Adrenal gland (tissue), 19 donors: ENCODE measurements at regions of chr4 and their contacts with region 1.

Region 1: DNA sequence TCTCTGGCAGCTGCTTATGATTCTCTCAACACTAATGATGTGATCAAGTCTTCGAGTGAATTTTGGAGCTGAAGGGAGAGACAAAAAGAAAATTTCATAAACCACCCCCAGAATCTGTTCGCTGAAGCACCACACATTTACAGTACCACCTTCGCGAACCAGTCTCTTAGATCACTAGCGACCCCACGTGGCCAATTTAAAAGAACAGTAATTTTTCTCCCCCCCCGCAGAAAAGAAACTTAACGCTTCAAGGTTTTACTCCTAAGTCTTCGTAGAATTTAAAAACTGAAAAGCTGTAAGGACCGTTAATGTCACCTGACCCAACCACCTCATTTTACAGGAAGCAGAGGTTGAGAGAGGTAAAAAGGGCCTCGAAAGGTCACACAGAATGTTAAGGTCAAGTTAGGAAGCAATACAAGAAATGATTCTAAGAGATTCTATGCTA is 187.5 kb downstream of the QDPR start:
- DNase-seq: peak; percentile 23 to 64 (median 45)
- H3K4me3 ChIP-seq: no peak overlapping the region
- H3K27ac ChIP-seq: no peak overlapping the region
- H3K4me1 ChIP-seq: peaks cover 6 to 8% of the 10 kb centered on the region in 2 donors
- H3K27me3 ChIP-seq: no peaks in the 10 kb centered on the region
- CTCF ChIP-seq: peak; percentile 53 to 75 (median 62)
- POLR2A ChIP-seq: no peak

Region 2: GRCh38 chr4:16794816-16795445 is 529.5 kb before region 1 on chr4:
- intact Hi-C with region 1: loop called in 1 of 2 experiments (anchors 10 kb)
- DNase-seq: peak; percentile 58 to 83 (median 60)
- H3K4me3 ChIP-seq: no peak overlapping the region
- H3K27ac ChIP-seq: no peak overlapping the region
- H3K4me1 ChIP-seq: no peaks in the 10 kb centered on the region
- H3K27me3 ChIP-seq: no peaks in the 10 kb centered on the region
- CTCF ChIP-seq: peak; percentile 55 to 77 (median 66)
- POLR2A ChIP-seq: no peak

Region 3: DNA sequence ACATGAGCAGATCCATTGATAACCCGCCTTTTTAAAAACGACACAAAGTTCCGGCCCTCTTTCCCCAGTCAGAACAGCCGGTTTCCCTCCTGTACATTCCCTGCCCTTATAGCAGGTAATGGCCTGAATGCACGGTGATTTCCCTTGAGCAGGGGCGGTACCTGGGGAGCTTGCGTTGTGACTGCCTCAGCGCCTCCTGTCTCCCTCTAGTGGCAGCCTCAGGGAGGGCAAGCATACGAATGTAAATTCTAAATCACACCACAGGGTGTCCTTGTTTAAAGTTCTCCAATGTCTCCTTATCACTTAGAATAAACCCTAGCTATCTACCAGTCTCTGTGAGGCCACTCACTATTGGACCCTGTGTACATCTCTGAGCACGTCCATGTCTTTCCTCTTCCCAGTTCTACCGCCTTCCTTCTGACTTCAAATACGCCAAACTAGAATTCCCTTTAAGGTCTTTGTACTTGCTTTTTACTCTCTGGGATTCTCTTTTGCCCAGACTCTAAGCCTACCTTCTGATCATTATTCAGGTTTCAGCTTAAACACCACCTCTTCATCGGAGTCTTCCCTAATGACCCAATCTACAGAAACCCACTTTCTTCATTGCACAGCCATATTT is 407.6 kb before region 1 on chr4:
- intact Hi-C with region 1: loop called in 1 of 2 experiments (anchors 10 kb)
- DNase-seq: peak; percentile 28 to 78 (median 57)
- H3K4me3 ChIP-seq: no peak overlapping the region
- H3K27ac ChIP-seq: no peak overlapping the region
- H3K4me1 ChIP-seq: no peaks in the 10 kb centered on the region
- H3K27me3 ChIP-seq: no peaks in the 10 kb centered on the region
- CTCF ChIP-seq: peak; percentile 71 to 90 (median 78)
- POLR2A ChIP-seq: no peak

Region 4: DNA sequence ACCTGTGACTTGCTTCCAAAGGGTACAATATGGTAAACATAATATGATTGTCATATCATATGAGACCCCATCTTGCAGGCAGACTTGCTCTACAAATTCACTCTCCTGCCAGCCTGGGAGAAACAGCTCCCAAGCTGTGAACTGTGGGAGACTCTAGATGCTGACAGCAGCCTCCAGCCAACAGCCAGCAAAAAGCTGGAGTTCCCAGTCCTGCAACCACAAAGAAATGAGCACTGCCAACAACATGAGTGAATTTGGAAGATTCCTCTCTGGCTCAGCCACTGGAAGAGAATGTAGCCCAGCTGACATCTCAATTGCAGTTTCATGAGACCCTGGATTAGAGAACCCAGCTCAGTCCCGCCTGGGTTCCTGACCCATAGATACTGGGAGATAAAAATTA is 42.1 kb after region 1 on chr4:
- intact Hi-C with region 1: no loop called
- DNase-seq: no peak
- H3K4me3 ChIP-seq: no peak overlapping the region
- H3K27ac ChIP-seq: no peak overlapping the region
- H3K4me1 ChIP-seq: no peaks in the 10 kb centered on the region
- H3K27me3 ChIP-seq: no peaks in the 10 kb centered on the region
- CTCF ChIP-seq: no peak
- POLR2A ChIP-seq: no peak